ENCODE measurements at regions of chr1 and their contacts with region 1.

Region 1: GRCh38 chr1:33127001-33127791 is 46.2 kb downstream of the AZIN2 start:
- DNase-seq: peak; percentile 100
- H3K4me3 Mint-ChIP-seq: peak overlapping the region; percentile 93
- H3K27ac Mint-ChIP-seq: peak overlapping the region; percentile 97
- H3K4me1 Mint-ChIP-seq: peaks cover 41% of the 10 kb centered on the region
- H3K27me3 Mint-ChIP-seq: no peaks in the 10 kb centered on the region

Region 2: DNA sequence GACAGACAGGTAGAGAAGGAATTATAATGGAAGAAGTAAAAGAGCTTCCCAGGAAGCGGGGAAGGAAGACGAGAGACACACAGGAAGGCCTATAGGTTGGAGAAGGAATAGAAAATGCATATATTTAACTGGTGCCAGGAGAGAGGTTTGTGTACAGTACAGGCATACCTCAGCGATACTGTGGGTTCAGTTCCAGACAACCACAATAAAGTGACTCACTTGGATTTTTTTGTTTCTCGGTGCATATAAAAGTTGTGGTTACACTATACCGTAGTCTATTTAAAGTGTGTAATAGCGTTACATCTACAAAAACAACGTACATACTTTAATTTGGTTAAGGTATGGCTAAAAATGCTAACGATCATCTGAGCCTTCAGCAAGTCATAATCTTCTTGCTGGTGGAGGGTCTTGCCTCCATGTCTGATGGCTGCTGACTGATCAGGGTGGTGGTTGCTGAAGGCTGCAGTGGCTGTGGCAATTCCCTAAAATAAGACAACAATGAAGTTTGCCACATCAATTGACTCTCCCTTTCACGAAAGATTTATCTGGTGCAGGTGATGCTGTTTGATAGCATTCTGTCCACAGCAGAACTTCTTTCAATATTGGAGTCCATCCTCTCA is 326.0 kb before region 1 on chr1:
- CTCF ChIA-PET with region 1: no interaction called
- POLR2A ChIA-PET with region 1: no interaction called
- intact Hi-C with region 1: loop called (anchors 5 kb)
- DNase-seq: peak; percentile 58
- H3K4me3 Mint-ChIP-seq: peak overlapping the region; percentile 13
- H3K27ac Mint-ChIP-seq: peak overlapping the region; percentile 74
- H3K4me1 Mint-ChIP-seq: peaks cover 56% of the 10 kb centered on the region
- H3K27me3 Mint-ChIP-seq: no peaks in the 10 kb centered on the region

Region 3: GRCh38 chr1:33080885-33081553 is 46.2 kb before region 1 on chr1 and contains the start of gene AZIN2:
- CTCF ChIA-PET with region 1: interaction called, 5 read pairs
- POLR2A ChIA-PET with region 1: no interaction called
- intact Hi-C with region 1: loop called (anchors 1 kb)
- DNase-seq: peak; percentile 98
- H3K4me3 Mint-ChIP-seq: peak within 1 kb of the TSS; percentile 62
- H3K27ac Mint-ChIP-seq: no peak within 1 kb of the TSS
- H3K4me1 Mint-ChIP-seq: peaks cover 6% of the 10 kb centered on the region
- H3K27me3 Mint-ChIP-seq: no peaks in the 10 kb centered on the region
- total RNA-seq, gene AZIN2: 2.5 to 2.9 TPM

Region 4: GRCh38 chr1:33111970-33112369 is 15.2 kb before region 1 on chr1:
- CTCF ChIA-PET with region 1: interaction called, 18 read pairs
- POLR2A ChIA-PET with region 1: no interaction called
- intact Hi-C with region 1: no loop called
- DNase-seq: peak; percentile 7
- H3K4me3 Mint-ChIP-seq: no peak overlapping the region
- H3K27ac Mint-ChIP-seq: no peak overlapping the region
- H3K4me1 Mint-ChIP-seq: no peaks in the 10 kb centered on the region
- H3K27me3 Mint-ChIP-seq: no peaks in the 10 kb centered on the region

Region 5: DNA sequence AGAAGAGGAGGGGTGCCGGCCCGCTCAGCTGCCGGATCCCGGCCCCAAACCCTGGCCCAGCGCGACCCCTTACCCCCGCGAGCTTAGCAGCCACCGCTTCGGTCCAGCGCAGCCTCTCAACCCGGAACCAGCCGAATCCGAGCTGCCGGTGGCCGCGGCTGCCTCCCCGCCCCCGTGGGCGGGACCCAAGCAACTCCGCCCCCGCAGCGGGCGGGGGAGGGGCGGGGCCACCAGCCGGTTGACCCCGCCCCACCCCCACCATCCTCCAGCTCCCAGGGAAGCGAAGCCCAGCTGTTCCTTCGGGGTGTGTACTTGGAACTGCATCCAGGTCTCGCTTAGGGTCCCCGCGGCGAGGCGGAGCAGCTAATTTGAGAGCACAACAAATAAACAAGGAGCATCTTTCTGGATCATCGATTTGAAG is 54.7 kb after region 1 on chr1 and contains the start of gene TRIM62:
- CTCF ChIA-PET with region 1: interaction called, 21 read pairs
- POLR2A ChIA-PET with region 1: interaction called, 10 read pairs
- intact Hi-C with region 1: loop called (anchors 2 kb)
- DNase-seq: peak; percentile 78
- H3K4me3 Mint-ChIP-seq: peak within 1 kb of the TSS; percentile 83
- H3K27ac Mint-ChIP-seq: no peak within 1 kb of the TSS
- H3K4me1 Mint-ChIP-seq: peaks cover 14% of the 10 kb centered on the region
- H3K27me3 Mint-ChIP-seq: peaks cover 6% of the 10 kb centered on the region
- total RNA-seq, gene TRIM62: 3.6 to 3.9 TPM

Region 6: DNA sequence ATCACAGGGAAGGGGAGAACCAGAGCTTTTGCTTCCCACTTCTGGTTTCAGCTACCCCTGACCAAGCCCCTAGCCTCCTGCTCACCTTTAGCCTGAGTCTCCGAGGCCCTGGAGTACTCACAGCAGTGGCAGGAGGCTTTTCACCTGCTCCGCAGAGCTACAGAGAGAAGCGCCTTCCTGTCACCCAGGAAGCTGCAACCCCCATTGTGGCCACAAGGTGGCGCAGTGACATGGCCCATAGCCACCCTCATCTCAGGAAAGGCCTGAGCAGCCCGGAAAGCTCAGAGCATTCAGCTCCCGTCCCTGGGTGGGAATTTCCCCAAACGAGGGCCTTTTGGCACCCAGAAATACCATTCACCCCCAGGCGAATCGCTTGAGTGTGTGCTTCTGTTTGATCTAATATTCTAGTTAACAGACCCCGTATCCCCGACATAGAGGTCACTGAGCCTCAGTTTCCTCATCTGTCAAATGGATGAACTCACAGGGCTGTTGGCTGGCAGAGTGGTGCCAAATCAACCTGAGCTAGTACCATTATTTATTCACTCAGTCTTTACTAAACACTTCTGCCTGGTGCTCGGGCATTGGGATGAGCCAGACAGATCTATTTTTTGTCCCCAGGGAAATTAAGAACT is 168.4 kb after region 1 on chr1:
- CTCF ChIA-PET with region 1: interaction called, 9 read pairs
- POLR2A ChIA-PET with region 1: no interaction called
- intact Hi-C with region 1: loop called (anchors 5 kb)
- DNase-seq: peak; percentile 94
- H3K4me3 Mint-ChIP-seq: no peak overlapping the region
- H3K27ac Mint-ChIP-seq: no peak overlapping the region
- H3K4me1 Mint-ChIP-seq: peaks cover 5% of the 10 kb centered on the region
- H3K27me3 Mint-ChIP-seq: no peaks in the 10 kb centered on the region

Region 7: GRCh38 chr1:33472349-33472980 is 345.3 kb after region 1 on chr1 and contains the start of gene ZSCAN20:
- CTCF ChIA-PET with region 1: interaction called, 6 read pairs
- POLR2A ChIA-PET with region 1: no interaction called
- intact Hi-C with region 1: loop called (anchors 2 kb)
- DNase-seq: peak; percentile 95
- H3K4me3 Mint-ChIP-seq: peak within 1 kb of the TSS; percentile 83
- H3K27ac Mint-ChIP-seq: peak within 1 kb of the TSS; percentile 77
- H3K4me1 Mint-ChIP-seq: peaks cover 27% of the 10 kb centered on the region
- H3K27me3 Mint-ChIP-seq: no peaks in the 10 kb centered on the region
- total RNA-seq, gene ZSCAN20: 3.8 to 4.1 TPM

Region 8: DNA sequence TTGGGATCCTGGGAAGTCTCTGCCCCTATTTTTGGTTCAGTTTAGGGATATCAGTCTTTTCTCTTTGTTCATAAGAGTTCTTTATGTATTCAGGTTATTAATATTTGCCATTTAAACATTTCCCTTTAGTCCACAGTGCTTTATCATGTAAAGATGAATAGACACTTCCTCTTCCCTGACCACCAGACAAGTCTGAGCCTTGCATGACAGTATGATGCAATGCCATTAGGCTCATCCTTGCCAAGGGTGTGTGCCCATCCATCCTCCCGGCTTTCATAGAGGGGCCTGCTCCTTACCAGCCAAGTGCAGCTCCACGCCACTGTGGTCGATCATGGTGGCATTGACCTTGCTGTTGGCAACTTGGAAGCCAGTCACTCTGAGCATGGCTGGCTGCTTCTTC is 397.4 kb after region 1 on chr1:
- CTCF ChIA-PET with region 1: no interaction called
- POLR2A ChIA-PET with region 1: no interaction called
- intact Hi-C with region 1: no loop called
- DNase-seq: no peak
- H3K4me3 Mint-ChIP-seq: no peak overlapping the region
- H3K27ac Mint-ChIP-seq: no peak overlapping the region
- H3K4me1 Mint-ChIP-seq: no peaks in the 10 kb centered on the region
- H3K27me3 Mint-ChIP-seq: peaks cover 27% of the 10 kb centered on the region